ENCODE measurements at regions of chr7 and their contacts with region 1.

Region 1: GRCh38 chr7:152370297-152370696 is 65.5 kb downstream of the KMT2C start:
- DNase-seq: no peak
- ATAC-seq: peak; percentile 44
- H3K4me3 ChIP-seq: no peak overlapping the region
- H3K27ac ChIP-seq: no peak overlapping the region
- H3K4me1 ChIP-seq: peaks cover 3 to 4% of the 10 kb centered on the region in 2 experiments; a peak in 4 of 5 replicates
- H3K27me3 ChIP-seq: no peaks in the 10 kb centered on the region
- CTCF ChIP-seq: no peak
- EP300 ChIP-seq: no peak
- POLR2A ChIP-seq: no peak
- RAD21 ChIP-seq: no peak

Region 2: DNA sequence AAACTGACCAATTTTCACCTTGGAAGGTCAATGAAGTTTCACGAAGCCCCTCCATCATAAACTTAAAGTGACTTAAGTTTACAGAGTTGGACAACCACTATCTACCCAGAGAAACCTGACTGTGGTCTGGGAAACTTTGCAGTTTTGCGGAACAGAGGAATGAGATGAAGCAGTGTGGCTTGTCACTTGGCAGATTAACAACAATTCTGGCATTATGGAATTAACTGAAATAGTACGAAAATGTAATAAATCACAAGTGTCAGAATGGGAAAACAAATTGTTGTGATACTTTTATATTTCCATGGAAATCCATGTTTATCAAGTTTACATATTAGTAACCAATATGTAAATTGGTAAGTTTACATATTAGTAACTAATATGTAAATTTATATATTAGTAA is 60.6 kb after region 1 on chr7:
- CTCF ChIA-PET with region 1: no interaction called
- POLR2A ChIA-PET with region 1: no interaction called
- in situ Hi-C with region 1: no loop called
- intact Hi-C with region 1: loop called (anchors 5 kb)
- DNase-seq: no peak
- ATAC-seq: no peak
- H3K4me3 ChIP-seq: no peak overlapping the region
- H3K27ac ChIP-seq: peak overlapping the region; percentile 15; the same call in 1 of the 3 replicates
- H3K4me1 ChIP-seq: peaks cover 17 to 27% of the 10 kb centered on the region in 2 experiments
- H3K27me3 ChIP-seq: no peaks in the 10 kb centered on the region
- CTCF ChIP-seq: no peak
- EP300 ChIP-seq: no peak
- POLR2A ChIP-seq: no peak
- RAD21 ChIP-seq: no peak